ENCODE measurements at regions of chr3 and their contacts with region 1.

Region 1: DNA sequence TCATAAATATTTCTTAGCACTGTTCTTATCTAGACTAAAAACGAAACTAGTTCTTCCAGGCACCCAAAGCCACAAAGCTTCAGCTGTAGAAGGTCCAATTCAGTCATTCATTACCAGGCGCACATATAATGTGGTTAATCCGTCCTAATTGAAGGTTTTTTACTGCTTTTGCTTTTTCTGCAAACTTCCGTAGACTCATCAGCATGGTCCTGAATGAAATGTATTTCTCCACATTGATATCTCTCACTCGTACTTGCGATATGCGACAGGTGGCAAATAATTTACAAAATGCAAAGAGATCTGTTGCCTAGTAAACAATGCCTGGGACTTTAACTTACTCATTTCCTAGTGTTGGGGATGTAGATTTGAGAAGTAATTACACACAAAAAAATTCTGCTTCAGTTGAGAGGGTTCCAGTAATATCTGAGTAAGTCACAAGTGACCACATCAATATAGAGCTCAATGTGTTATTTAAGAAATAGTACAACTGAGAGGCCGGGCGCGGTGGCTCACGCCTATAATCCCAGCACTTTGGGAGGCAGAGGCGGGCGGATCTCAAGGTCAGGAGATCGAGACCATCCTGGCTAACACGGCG is 75.0 kb upstream of the MBNL1 start:
- DNase-seq: peak; percentile 29
- H3K4me3 Mint-ChIP-seq: peak overlapping the region; percentile 69
- H3K27ac Mint-ChIP-seq: peak overlapping the region; percentile 89
- H3K4me1 Mint-ChIP-seq: peaks cover 75% of the 10 kb centered on the region
- H3K27me3 Mint-ChIP-seq: no peaks in the 10 kb centered on the region

Region 2: DNA sequence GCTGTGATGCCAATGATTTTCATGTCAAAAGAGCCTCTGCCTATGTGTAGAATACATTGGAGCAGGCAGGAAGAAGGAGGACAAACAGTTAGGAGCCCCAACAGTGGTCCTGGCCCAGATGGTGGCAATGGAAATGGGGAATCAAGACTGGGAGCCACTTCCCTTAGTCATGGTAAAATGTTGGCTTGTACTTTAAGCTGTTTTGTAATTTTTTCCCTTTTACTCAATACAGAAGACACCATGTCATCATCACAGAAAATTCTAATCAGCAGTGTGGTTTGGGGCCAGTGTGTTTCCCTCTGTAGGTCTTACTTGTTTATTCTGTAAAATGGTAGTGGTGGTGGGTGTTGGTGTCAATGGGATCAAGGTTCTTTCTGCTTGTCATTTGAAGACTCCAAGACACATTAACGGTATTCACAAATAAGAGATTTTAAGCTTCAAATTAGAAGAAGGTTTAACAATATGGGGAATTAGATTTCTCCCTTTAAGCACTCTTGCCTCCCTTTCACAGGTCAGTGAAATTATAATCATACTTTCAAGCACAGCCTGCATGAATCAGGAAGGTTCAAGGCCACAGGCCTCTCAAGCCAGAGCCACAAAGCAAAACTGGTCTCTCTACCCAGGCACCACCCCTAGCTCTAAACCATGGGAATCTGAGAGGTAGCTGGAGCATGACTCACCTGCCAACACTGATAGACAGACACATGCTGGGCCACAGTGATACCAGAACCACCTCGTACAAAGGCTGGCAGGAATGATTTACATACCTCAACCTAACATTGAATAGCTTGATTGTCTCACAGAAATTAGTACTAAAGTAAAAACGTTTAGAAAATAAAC is 1455.7 kb before region 1 on chr3:
- intact Hi-C with region 1: loop called (anchors 10 kb)
- DNase-seq: no peak
- H3K4me3 Mint-ChIP-seq: peak overlapping the region; percentile 53
- H3K27ac Mint-ChIP-seq: peak overlapping the region; percentile 100
- H3K4me1 Mint-ChIP-seq: peaks cover 91% of the 10 kb centered on the region
- H3K27me3 Mint-ChIP-seq: no peaks in the 10 kb centered on the region

Region 3: GRCh38 chr3:152011812-152012735 is 181.7 kb before region 1 on chr3:
- intact Hi-C with region 1: no loop called
- DNase-seq: no peak
- H3K4me3 Mint-ChIP-seq: no peak overlapping the region
- H3K27ac Mint-ChIP-seq: no peak overlapping the region
- H3K4me1 Mint-ChIP-seq: no peaks in the 10 kb centered on the region
- H3K27me3 Mint-ChIP-seq: peaks cover 5% of the 10 kb centered on the region

Region 4: DNA sequence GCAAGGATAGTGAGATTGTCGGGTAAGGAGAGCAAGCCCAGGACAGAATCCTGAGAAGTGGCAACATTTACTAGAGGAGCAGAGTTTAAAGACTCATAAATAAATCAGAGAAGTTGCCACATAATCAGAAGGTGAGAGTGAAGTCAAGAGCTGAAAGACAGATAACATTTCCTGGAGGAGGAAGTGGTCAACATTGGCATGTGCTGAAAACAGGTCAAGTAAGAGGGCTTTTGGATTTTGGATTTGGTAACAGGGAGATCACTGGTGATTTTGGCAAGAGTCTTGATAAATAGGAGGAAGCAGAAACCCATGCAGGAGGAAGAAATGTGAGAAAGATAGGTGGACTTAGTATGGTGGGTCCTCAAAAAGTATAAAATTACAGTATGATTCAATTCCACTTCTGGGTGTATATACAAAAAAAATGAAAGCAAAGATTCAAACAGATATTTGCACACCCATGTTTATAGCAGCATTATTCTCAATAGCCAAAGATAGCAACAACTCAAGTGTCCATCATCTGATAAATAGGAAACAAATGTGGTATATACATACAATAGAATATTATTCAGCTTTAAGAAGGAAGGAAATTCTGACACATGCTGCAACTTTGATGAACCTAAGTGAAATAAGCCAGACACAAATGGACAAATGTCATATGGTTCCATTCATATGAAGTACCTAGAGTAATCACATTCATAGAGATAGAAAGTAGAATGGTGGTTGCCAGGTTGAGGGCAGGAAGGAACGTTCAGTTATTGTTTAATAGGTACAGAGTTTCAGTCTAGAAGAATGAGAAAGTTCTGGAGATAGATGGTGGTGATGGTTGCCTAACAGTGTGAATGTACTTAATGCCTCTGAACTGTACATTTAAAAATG is 47.6 kb after region 1 on chr3:
- intact Hi-C with region 1: loop called (anchors 1 kb)
- DNase-seq: no peak
- H3K4me3 Mint-ChIP-seq: peak overlapping the region; percentile 66
- H3K27ac Mint-ChIP-seq: peak overlapping the region; percentile 77
- H3K4me1 Mint-ChIP-seq: peaks cover 54% of the 10 kb centered on the region
- H3K27me3 Mint-ChIP-seq: no peaks in the 10 kb centered on the region

Region 5: GRCh38 chr3:152444029-152444641 is 250.4 kb after region 1 on chr3:
- intact Hi-C with region 1: loop called (anchors 5 kb)
- DNase-seq: no peak
- H3K4me3 Mint-ChIP-seq: no peak overlapping the region
- H3K27ac Mint-ChIP-seq: peak overlapping the region; percentile 14
- H3K4me1 Mint-ChIP-seq: peaks cover 51% of the 10 kb centered on the region
- H3K27me3 Mint-ChIP-seq: no peaks in the 10 kb centered on the region

Region 6: DNA sequence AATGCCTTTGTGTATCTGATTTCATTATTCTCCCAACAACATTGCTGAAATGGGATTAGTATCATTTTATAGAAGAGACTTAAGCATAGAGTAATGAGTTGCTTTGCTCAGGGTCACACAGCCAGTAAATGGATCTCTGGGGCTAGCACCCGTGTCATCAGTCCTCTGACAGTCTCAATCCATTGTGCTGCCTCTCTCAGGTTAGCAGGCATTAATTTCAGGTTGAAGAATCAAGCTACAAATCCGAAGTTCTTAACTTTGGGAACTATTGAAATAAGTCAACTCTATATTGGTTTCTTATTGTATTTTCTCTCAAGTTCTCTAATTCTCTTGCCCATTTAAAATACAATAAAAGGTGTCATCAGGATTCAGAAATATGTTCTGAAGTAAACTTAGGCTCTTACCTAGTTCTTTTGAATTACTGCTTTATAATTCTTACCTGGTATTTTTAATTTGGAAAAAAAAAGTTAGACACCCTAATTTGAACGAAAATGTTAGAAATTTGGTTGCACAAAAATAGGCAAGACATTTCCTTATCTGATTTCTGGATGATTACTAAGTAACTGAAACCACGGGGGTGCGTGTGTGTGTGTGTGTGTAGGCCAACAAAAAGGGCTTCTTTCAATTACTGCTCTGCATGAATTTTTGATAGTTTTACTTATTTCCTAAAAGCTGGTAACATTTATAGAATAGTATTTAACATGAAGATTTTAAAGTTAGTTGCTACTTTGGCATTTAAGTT is 264.8 kb after region 1 on chr3:
- intact Hi-C with region 1: loop called (anchors 5 kb)
- DNase-seq: no peak
- H3K4me3 Mint-ChIP-seq: peak overlapping the region; percentile 26
- H3K27ac Mint-ChIP-seq: peak overlapping the region; percentile 39
- H3K4me1 Mint-ChIP-seq: peaks cover 31% of the 10 kb centered on the region
- H3K27me3 Mint-ChIP-seq: no peaks in the 10 kb centered on the region

Measured in activated T-helper 2 cell treated with anti-CD3 and anti-CD28 coated beads, Interferon-gamma antibody, Interleukin-2, Interleukin-4, amounts not matched to agents 10 μg/mL and 5 μg/mL and 100 μg/mL, durations not matched to agents 14 hours and 24 hours and 36 hours (primary cell).